ENCODE measurements at regions of chr2 and their contacts with region 1.

Region 1: GRCh38 chr2:207746131-207746530 is 23.6 kb downstream of the FZD5 start:
- DNase-seq: peak in 4 of 5 donors; percentile 57 to 82 (median 68)
- H3K4me3 ChIP-seq: no peak overlapping the region
- H3K27ac ChIP-seq: no peak overlapping the region
- H3K4me1 ChIP-seq: peaks cover 0 to 12% (median 0%) of the 10 kb centered on the region in 3 donors
- H3K27me3 ChIP-seq: no peaks in the 10 kb centered on the region
- CTCF ChIP-seq: peak; percentile 90

Region 2: DNA sequence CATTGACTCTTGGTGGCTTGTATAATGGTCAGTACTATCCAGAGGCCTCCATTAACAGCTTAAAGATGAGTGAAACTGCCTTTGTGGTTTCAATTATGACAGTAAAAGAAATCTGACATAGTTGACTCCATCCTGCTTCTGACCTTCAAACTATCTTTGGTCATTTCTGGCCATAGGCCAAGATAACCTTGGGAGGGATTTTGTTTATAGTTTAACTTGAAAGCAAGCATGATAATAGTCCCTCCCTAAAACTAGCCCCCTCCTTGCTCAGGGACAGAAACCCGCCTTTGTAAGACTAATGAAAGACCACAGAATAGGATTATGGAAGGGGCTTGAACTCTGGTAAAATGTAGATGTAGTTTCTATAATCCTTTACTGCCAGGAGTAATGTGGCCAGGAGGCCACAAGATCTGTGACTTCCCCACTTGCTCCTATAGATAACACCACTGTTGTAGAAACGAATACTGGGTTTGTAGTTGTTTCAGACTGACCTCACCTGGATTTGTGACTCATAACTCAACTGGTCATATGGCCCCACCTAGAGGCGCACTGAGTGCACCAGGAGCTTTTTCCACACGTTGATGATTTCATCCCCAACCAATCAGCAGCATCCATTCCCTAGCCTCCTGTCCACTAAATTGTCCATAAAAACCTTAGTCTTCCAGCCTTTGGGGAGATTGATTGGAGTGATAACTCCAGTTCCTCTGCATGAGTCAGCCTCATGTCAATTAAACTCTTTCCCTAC is 287.8 kb after region 1 on chr2:
- intact Hi-C with region 1: loop called (anchors 10 kb)
- DNase-seq: peak in 3 of 5 donors; percentile 14 to 51 (median 25)
- H3K4me3 ChIP-seq: no peak overlapping the region
- H3K27ac ChIP-seq: no peak overlapping the region
- H3K4me1 ChIP-seq: no peaks in the 10 kb centered on the region
- H3K27me3 ChIP-seq: no peaks in the 10 kb centered on the region
- CTCF ChIP-seq: peak; percentile 45

Region 3: GRCh38 chr2:208072250-208072892 is 326.2 kb after region 1 on chr2:
- intact Hi-C with region 1: loop called (anchors 10 kb)
- DNase-seq: peak; percentile 68 to 80 (median 73)
- H3K4me3 ChIP-seq: no peak overlapping the region
- H3K27ac ChIP-seq: no peak overlapping the region
- H3K4me1 ChIP-seq: no peaks in the 10 kb centered on the region
- H3K27me3 ChIP-seq: no peaks in the 10 kb centered on the region
- CTCF ChIP-seq: peak; percentile 77

Region 4: GRCh38 chr2:208222351-208222750 is 476.2 kb after region 1 on chr2:
- intact Hi-C with region 1: no loop called
- DNase-seq: no peak
- H3K4me3 ChIP-seq: no peak overlapping the region
- H3K27ac ChIP-seq: no peak overlapping the region
- H3K4me1 ChIP-seq: no peaks in the 10 kb centered on the region
- H3K27me3 ChIP-seq: no peaks in the 10 kb centered on the region
- CTCF ChIP-seq: no peak